IMR-90 (cell line): ENCODE measurements at regions of chr16 and their contacts with region 1.

Region 1: DNA sequence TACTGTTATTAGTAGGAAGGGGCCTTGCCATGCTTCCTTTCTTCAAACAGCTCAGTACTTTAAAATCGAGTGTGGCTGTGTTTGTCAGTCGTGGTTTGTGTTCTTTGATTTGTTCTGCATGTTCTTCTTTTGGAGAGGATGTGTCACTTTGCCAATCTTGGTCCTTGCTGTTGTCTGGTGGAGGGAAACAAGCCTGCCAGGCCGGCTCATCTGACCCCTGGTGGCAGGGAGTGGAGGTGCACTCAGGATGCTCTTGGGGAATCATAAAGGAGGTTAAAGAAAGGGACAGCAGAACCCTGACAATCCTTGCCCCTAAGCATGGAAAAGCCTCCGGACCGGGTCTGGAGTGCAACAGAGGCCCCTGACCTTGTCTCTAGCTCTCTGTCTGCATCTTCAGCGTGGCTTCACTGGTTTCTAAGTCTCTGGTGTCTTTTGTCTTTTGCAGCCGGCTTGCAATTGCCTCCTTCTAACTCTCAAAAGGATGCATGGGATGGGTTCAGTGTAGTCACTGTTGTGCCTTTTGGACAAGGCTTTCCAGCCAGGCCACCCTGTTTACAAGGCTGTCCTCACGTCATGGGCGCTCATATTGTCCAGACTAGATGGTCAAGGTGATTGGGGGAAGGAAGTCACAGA is 135.8 kb downstream of the WWOX start:
- DNase-seq: peak; percentile 57
- ATAC-seq: peak; percentile 95
- H3K4me3 ChIP-seq: no peak overlapping the region
- H3K27ac ChIP-seq: no peak overlapping the region
- H3K4me1 ChIP-seq: no peaks in the 10 kb centered on the region; the same call in 1 of the 2 replicates
- H3K27me3 ChIP-seq: no peaks in the 10 kb centered on the region; the same call in 1 of the 2 replicates
- CTCF ChIP-seq: peak; percentile 74
- POLR2A ChIP-seq: no peak
- RAD21 ChIP-seq: peak; percentile 58

Region 2: GRCh38 chr16:78116946-78117345 is 118.3 kb before region 1 on chr16:
- CTCF ChIA-PET with region 1: interaction called, 3 read pairs
- POLR2A ChIA-PET with region 1: no interaction called
- dilution Hi-C with region 1: no loop called
- in situ Hi-C with region 1: loop called (anchors 5 kb)
- intact Hi-C with region 1: no loop called
- DNase-seq: no peak
- ATAC-seq: no peak
- H3K4me3 ChIP-seq: no peak overlapping the region
- H3K27ac ChIP-seq: no peak overlapping the region
- H3K4me1 ChIP-seq: no peaks in the 10 kb centered on the region
- H3K27me3 ChIP-seq: no peaks in the 10 kb centered on the region
- CTCF ChIP-seq: no peak
- POLR2A ChIP-seq: no peak
- RAD21 ChIP-seq: no peak

Region 3: DNA sequence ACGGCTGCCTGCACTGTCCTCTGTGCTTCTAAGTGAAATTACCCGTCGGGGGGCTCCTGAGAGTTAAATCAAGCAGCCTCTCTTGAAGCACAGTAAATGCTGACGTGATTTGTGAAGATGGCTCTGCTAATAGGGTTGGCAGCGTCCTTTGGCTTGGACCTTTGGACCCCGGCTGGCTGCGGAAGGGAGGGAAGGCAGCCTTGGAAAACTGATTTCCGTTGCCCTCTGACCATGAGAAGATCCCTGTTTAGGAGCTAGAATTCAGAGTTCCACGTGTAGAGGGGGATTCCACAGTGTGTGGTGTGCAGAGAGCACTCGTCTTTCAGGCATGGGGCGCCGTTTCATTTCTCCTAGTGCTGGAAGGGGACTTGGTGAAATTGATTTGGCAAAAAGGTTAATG is 505.0 kb after region 1 on chr16:
- CTCF ChIA-PET with region 1: no interaction called
- POLR2A ChIA-PET with region 1: no interaction called
- dilution Hi-C with region 1: no loop called
- in situ Hi-C with region 1: no loop called
- intact Hi-C with region 1: no loop called
- DNase-seq: no peak
- ATAC-seq: no peak
- H3K4me3 ChIP-seq: no peak overlapping the region
- H3K27ac ChIP-seq: no peak overlapping the region
- H3K4me1 ChIP-seq: no peaks in the 10 kb centered on the region; the same call in 1 of the 2 replicates
- H3K27me3 ChIP-seq: no peaks in the 10 kb centered on the region
- CTCF ChIP-seq: no peak
- POLR2A ChIP-seq: no peak
- RAD21 ChIP-seq: no peak